Heart right ventricle (tissue), 16 donors: ENCODE measurements at regions of chr17 and their contacts with region 1.

Region 1: DNA sequence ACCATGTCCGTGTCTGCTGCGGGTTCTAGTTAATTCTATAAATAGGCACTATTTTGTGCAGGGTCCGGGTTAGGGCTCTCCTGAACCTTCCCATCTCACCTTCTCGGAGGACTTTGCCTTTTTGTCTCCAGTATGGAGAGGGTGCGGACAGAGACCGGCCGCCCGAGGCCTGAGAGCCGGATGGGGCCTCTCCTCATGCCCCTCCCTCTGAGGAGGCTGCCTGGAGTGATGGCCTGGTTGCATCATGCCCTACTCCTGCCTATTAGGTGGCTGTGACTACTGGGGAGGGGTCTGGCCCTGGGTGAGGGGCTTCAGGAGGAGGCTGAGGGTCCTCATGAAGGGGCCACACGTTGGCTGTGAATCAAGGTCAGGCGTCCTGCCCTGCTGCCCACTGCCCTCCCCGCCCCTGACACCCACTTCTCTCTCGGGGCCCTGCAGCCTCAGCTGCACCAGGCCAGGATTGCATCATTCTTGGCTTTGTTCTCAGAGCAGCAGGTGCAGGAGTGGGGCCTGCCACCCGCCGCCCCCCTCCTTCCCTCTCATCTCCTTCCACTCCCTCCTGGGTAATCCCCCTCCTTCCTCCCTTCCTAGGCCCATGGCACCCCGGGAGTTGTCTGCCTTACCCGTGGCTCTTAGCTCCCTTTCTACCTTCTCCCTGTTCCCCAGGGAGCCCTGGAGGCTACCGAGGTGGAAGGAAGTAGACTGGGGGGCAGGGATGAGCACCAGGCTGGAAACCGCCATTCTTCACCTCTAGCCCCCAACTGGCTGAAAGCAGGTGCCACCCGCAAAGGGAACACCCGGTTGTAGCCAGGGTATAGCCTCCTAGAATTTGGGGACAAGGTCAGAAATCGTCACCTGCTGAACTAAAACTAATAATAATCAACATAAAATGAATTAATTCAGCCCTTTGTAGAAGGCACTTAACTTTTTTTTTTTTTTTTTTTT is 12.7 kb upstream of the ARHGAP23 start:
- DNase-seq: no peak
- ATAC-seq: peak in 6 of 8 donors; percentile 19 to 50 (median 48)
- H3K4me3 ChIP-seq: peak overlapping the region in 5 of 10 donors; percentile 0 to 15 (median 10)
- H3K27ac ChIP-seq: no peak overlapping the region
- H3K4me1 ChIP-seq: peaks cover 4 to 30% (median 15%) of the 10 kb centered on the region in 9 donors
- H3K27me3 ChIP-seq: peaks cover 0 to 46% (median 23%) of the 10 kb centered on the region in 7 donors
- CTCF ChIP-seq: no peak

Region 2: DNA sequence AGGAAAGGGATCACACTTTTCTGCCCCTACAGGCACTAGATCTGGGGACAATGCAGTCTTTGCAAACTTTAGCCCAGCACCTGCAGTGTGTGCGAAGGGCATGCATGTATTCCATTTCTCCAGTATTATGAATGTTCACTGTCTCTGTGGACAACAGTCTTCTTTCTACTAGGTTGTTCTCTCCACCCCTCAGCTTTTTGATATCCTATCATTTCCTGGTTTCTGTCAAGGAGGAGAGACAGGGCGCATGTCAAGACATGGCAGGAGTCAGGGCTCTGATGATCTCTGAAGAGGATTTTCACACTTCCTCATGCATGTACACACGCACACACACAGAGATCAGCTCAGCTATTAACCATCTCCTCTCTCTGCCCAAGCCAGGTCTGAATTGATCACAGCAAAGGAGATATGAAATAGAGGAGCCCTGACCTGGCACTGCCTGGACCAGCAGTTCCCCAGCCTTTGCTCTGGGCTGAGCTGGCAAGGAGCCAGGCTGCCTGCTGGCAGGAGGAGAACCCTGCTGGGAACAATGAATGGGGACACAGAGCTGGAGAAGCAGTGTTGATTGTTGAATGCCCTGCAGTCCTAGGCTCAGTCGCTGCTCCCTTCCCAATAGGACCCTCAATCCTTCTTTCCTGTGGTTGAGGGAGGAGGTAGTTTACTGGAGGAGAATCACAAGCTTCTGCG is 74.3 kb before region 1 on chr17:
- intact Hi-C with region 1: loop called in 1 of 10 experiments (anchors 5 kb)
- DNase-seq: peak; percentile 40 to 72
- ATAC-seq: peak; percentile 58 to 88 (median 80)
- H3K4me3 ChIP-seq: no peak overlapping the region
- H3K27ac ChIP-seq: no peak overlapping the region
- H3K4me1 ChIP-seq: peaks cover 0 to 11% (median 0%) of the 10 kb centered on the region in 9 donors
- H3K27me3 ChIP-seq: peaks cover 0 to 14% (median 0%) of the 10 kb centered on the region in 7 donors
- CTCF ChIP-seq: no peak

Region 3: GRCh38 chr17:38511081-38511728 is 95.7 kb after region 1 on chr17:
- intact Hi-C with region 1: no loop called
- DNase-seq: no peak
- ATAC-seq: peak in 3 of 8 donors; percentile 1 to 6 (median 4)
- H3K4me3 ChIP-seq: peak overlapping the region in 3 of 10 donors; percentile 7 to 28 (median 12)
- H3K27ac ChIP-seq: no peak overlapping the region
- H3K4me1 ChIP-seq: peaks cover 0 to 17% (median 12%) of the 10 kb centered on the region in 9 donors
- H3K27me3 ChIP-seq: peaks cover 0 to 36% (median 0%) of the 10 kb centered on the region in 7 donors
- CTCF ChIP-seq: no peak